SK-N-SH (cell line): ENCODE measurements at regions of chr11 and their contacts with region 1.

Region 1: DNA sequence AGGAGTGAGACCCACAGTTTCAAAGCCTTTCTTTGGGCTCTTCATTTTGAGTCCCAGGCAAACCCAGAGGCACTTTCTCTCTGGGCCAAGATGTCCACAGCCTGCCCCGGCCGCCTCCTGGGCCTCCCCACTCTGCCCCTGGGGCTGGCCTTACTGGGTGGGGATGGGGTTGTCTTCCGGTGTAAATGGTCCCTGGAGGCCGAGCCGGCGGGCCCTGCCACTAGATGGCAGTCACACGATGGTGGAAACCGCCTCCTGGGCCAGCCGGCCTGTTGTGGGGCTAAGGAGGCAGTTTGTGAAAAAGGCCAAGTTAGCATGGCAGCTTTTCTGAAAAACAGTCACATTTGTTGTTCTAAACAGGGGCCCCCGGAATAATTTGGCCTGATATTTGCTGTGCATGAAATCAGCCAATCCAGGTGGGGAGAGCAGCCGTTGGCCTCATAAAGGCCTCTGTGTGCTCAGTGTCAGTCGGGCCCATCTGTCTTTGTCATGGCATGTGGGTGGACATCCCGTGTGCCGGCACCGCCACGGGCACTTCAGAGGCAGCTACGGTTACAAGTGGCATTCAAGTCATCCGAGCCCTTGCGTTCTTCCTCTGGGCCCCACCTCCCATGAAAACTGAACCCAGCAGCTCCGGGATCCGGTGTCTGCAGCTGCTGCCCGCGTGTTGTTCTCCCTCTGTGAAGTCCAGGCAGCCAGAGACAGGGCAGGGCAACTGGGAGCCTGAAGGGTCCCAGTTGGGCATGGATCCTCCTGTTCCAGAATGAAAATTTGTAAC is 6.5 kb downstream of the MRPL23 start:
- DNase-seq: no peak
- H3K4me3 ChIP-seq: no peak overlapping the region
- H3K27ac ChIP-seq: peak overlapping the region in 1 of 2 experiments; percentile 47; a peak in 1 of 4 replicates
- H3K4me1 ChIP-seq: no peaks in the 10 kb centered on the region; a peak in 1 of 4 replicates
- H3K27me3 ChIP-seq: no peaks in the 10 kb centered on the region
- CTCF ChIP-seq: no peak
- EP300 ChIP-seq: no peak
- RAD21 ChIP-seq: no peak

Region 2: DNA sequence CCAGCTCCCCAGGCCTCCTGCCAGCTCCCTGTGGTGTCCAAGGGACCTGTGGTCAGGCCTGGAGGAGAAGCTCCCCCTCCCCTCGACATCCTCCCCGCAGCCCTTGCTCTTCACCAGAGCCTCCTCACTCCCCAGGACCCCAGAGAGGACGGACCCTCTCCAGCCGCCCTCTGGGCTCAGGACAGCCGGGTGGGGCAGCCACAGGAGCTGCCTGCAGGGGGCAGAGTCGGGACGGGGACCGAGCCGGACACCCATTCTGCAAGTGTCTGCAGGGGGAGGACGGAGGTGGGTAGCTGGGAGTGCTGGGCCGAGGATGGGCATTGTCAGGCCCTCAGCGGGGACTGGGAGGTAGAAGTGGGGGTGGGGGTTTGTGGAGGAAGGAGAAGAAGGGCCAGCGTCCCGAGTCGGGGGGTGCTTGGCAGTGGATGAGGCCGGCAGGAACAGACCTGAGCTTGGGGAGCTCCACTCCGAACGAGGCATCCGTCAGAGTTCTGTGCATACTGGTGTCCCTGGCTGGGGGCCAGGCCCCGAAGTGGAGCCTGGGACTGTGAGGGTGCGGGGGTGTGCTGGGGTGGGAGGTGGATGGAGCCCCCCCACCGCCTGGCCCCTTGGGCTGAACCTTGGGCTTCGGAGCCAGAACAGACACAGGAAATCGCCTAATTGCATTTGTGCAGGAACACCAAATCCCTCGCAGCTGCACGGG is 77.2 kb before region 1 on chr11:
- CTCF ChIA-PET with region 1: interaction called, 74 read pairs
- POLR2A ChIA-PET with region 1: interaction called, 11 read pairs
- DNase-seq: peak; percentile 86
- H3K4me3 ChIP-seq: no peak overlapping the region; a peak in 1 of 4 replicates
- H3K27ac ChIP-seq: peak overlapping the region; percentile 28 to 78; a peak in 2 of 4 replicates
- H3K4me1 ChIP-seq: peaks cover 0 to 46% of the 10 kb centered on the region in 2 experiments; a peak in 2 of 4 replicates
- H3K27me3 ChIP-seq: no peaks in the 10 kb centered on the region
- CTCF ChIP-seq: peak; percentile 51
- EP300 ChIP-seq: no peak; a peak in 1 of 4 replicates
- RAD21 ChIP-seq: no peak

Region 3: GRCh38 chr11:1970956-1971355 is 17.3 kb after region 1 on chr11:
- CTCF ChIA-PET with region 1: interaction called, 36 read pairs
- POLR2A ChIA-PET with region 1: interaction called, 7 read pairs
- DNase-seq: no peak
- H3K4me3 ChIP-seq: no peak overlapping the region
- H3K27ac ChIP-seq: no peak overlapping the region; a peak in 1 of 4 replicates
- H3K4me1 ChIP-seq: no peaks in the 10 kb centered on the region
- H3K27me3 ChIP-seq: no peaks in the 10 kb centered on the region
- CTCF ChIP-seq: no peak
- EP300 ChIP-seq: no peak
- RAD21 ChIP-seq: no peak

Region 4: DNA sequence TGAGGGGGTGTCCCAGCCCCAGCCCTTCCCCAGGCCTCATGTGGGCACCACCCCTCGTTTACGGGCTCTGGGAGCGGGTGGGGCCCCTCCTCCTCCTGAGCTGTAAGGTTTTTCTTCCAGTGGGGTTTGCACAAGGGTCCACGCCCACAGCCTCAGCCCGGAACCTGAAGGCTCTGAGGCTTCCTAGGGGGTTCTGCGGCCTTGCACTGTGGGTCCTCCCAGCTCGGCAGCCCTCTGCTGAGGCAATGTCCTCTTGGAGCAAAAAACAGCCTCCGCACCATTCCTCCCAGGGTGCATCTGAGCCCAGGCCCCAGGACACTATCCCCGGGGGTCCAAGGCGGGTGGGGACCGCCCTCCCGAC is 29.9 kb after region 1 on chr11:
- CTCF ChIA-PET with region 1: interaction called, 30 read pairs
- POLR2A ChIA-PET with region 1: interaction called, 60 read pairs
- DNase-seq: no peak
- H3K4me3 ChIP-seq: no peak overlapping the region
- H3K27ac ChIP-seq: no peak overlapping the region; a peak in 1 of 4 replicates
- H3K4me1 ChIP-seq: no peaks in the 10 kb centered on the region
- H3K27me3 ChIP-seq: no peaks in the 10 kb centered on the region
- CTCF ChIP-seq: no peak
- EP300 ChIP-seq: no peak
- RAD21 ChIP-seq: no peak

Region 5: DNA sequence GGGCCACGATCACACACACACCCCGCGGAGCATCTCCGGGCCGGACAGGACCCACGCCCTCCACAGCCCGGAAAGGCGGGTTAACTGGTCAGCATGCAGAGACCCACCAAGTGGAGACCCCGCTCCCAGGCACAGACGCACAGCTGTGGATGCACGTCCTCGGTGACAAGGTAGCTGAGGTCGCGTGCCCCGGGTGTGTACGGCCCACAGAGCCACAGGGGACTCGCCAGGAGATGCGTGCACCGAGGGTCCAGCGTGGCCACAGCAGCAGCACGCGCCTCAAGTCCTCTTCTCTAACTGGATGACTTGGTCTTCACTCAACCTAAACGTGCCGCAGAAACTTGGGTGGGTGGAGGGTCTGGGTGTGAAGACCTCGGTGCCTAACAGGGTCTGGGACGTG is 38.4 kb after region 1 on chr11:
- CTCF ChIA-PET with region 1: interaction called, 18 read pairs
- POLR2A ChIA-PET with region 1: interaction called, 84 read pairs
- DNase-seq: no peak
- H3K4me3 ChIP-seq: no peak overlapping the region
- H3K27ac ChIP-seq: peak overlapping the region in 1 of 2 experiments; percentile 43; a peak in 1 of 4 replicates
- H3K4me1 ChIP-seq: no peaks in the 10 kb centered on the region; a peak in 1 of 4 replicates
- H3K27me3 ChIP-seq: no peaks in the 10 kb centered on the region
- CTCF ChIP-seq: no peak
- EP300 ChIP-seq: no peak
- RAD21 ChIP-seq: no peak

Region 6: DNA sequence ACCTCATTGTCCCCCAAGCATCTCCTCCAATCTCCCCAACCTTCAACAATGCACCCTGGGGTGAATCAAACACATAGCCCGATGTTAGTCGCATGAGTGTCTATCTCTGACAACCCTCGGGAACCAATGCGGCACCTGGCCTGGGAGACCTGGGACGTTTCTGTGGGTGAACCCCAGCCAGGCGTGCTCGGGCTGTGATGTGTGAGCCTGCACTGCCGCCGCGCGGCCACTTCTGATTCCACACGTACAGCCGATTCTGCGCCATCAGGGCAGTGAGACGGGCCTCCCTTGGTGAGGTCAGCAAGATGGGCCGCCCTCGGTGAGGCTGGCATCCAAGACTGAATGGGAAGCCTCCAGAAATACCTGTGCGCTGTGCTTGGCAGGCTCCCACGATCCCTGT is 49.1 kb after region 1 on chr11:
- CTCF ChIA-PET with region 1: interaction called, 41 read pairs
- POLR2A ChIA-PET with region 1: interaction called, 84 read pairs
- DNase-seq: no peak
- H3K4me3 ChIP-seq: no peak overlapping the region
- H3K27ac ChIP-seq: no peak overlapping the region
- H3K4me1 ChIP-seq: no peaks in the 10 kb centered on the region
- H3K27me3 ChIP-seq: no peaks in the 10 kb centered on the region
- CTCF ChIP-seq: no peak
- EP300 ChIP-seq: no peak
- RAD21 ChIP-seq: no peak

Region 7: DNA sequence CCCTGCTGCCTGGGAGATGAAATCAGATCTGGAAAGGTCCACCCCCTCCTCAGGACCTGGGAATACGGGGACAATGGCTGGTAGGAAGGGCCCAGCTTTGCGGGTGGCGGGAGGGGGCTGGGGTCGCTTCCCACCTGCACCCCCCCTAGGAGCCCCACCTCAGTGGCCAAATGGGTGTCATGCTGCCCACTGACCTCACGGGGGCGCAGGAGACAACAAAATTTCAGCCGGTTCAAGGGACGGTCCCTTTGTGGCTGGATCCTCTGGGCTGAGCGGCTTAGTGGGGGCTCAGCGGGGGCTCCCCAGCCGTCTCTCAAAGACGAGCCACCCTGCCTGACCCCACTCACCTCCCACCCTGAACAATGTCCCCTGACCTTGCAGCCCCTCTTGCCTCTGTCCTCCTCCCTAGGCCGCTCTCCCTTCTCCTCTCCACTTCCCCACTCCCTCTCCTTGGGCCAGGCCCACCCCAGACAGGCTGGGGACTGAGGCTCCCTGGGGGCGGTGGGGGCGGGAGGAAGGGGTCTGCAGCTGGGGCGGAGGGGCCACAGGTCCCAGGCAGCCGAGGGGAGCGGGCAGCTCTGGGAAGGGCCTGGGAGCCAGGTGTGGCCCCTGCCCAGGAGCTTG is 83.3 kb after region 1 on chr11:
- CTCF ChIA-PET with region 1: interaction called, 27 read pairs
- POLR2A ChIA-PET with region 1: interaction called, 10 read pairs
- DNase-seq: no peak
- H3K4me3 ChIP-seq: no peak overlapping the region
- H3K27ac ChIP-seq: no peak overlapping the region
- H3K4me1 ChIP-seq: no peaks in the 10 kb centered on the region
- H3K27me3 ChIP-seq: no peaks in the 10 kb centered on the region
- CTCF ChIP-seq: no peak
- EP300 ChIP-seq: no peak
- RAD21 ChIP-seq: no peak